Transverse colon (tissue), 4 donors: ENCODE measurements at regions of chr6 and their contacts with region 1.

Region 1: GRCh38 chr6:51456279-51456678 is 631.1 kb downstream of the PKHD1 start:
- DNase-seq: no peak
- H3K4me3 ChIP-seq: no peak overlapping the region
- H3K27ac ChIP-seq: no peak overlapping the region
- H3K4me1 ChIP-seq: peaks cover 0 to 13% (median 4%) of the 10 kb centered on the region in 4 donors
- H3K27me3 ChIP-seq: no peaks in the 10 kb centered on the region
- CTCF ChIP-seq: no peak
- EP300 ChIP-seq: no peak
- POLR2A ChIP-seq: no peak

Region 2: GRCh38 chr6:51494342-51494741 is 38.1 kb after region 1 on chr6:
- in situ Hi-C with region 1: no loop called
- intact Hi-C with region 1: loop called (anchors 1 kb)
- DNase-seq: no peak
- H3K4me3 ChIP-seq: no peak overlapping the region
- H3K27ac ChIP-seq: no peak overlapping the region
- H3K4me1 ChIP-seq: no peaks in the 10 kb centered on the region
- H3K27me3 ChIP-seq: no peaks in the 10 kb centered on the region
- CTCF ChIP-seq: peak in 1 of 5 experiments; percentile 12
- EP300 ChIP-seq: no peak
- POLR2A ChIP-seq: no peak

Region 3: GRCh38 chr6:51531623-51532022 is 75.3 kb after region 1 on chr6:
- in situ Hi-C with region 1: no loop called
- intact Hi-C with region 1: no loop called
- DNase-seq: no peak
- H3K4me3 ChIP-seq: no peak overlapping the region
- H3K27ac ChIP-seq: no peak overlapping the region
- H3K4me1 ChIP-seq: no peaks in the 10 kb centered on the region
- H3K27me3 ChIP-seq: no peaks in the 10 kb centered on the region
- CTCF ChIP-seq: no peak
- EP300 ChIP-seq: no peak
- POLR2A ChIP-seq: no peak

Region 4: DNA sequence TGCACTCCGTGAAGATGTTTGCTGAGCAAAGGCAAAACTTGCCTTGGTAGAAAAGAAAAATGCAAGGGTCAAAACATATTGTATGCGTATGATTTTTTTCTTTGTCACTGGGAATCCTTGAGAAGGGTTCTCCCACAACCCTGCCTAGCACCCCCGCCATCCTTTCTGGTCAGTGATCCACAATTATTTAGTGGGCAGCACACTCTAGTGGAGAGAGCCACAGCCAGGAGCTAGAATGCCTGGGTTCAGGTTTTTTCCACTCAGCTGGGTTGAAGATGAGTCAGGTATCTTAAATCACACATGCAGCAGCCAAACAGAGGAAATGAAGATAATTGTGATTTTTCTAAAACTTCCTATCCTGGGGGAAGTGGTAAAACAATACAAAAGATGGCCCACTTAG is 388.1 kb after region 1 on chr6:
- in situ Hi-C with region 1: no loop called
- intact Hi-C with region 1: no loop called
- DNase-seq: no peak
- H3K4me3 ChIP-seq: no peak overlapping the region
- H3K27ac ChIP-seq: no peak overlapping the region
- H3K4me1 ChIP-seq: no peaks in the 10 kb centered on the region
- H3K27me3 ChIP-seq: no peaks in the 10 kb centered on the region
- CTCF ChIP-seq: no peak
- EP300 ChIP-seq: no peak
- POLR2A ChIP-seq: no peak